PC-9 (cell line): ENCODE measurements at regions of chr5 and their contacts with region 1.

Region 1: GRCh38 chr5:130109152-130109551 is 204.9 kb downstream of the CHSY3 start:
- DNase-seq: no peak
- H3K4me3 ChIP-seq: no peak overlapping the region
- H3K27ac ChIP-seq: no peak overlapping the region
- H3K4me1 ChIP-seq: no peaks in the 10 kb centered on the region
- H3K27me3 ChIP-seq: no peaks in the 10 kb centered on the region
- CTCF ChIP-seq: peak; percentile 78

Region 2: DNA sequence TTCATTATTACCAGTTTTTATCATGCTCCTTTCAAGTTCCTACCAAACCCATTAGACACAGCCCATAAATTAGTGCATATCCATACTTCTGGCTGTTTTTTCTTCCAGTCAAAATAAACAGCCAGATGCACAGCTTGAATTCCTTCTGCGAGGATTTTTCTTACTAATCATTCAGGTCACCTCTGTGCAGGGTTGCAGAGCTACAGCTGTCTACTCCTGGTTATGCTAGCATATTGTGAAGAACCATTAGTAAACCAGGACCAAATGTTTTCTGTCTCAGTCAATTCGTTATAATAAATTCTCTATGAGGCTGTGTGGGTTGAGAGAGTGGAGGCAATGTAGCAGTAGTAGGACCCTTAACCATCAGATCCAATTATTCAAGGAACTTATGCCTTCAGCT is 369.4 kb before region 1 on chr5:
- CTCF ChIA-PET with region 1: no interaction called
- POLR2A ChIA-PET with region 1: no interaction called
- intact Hi-C with region 1: no loop called
- DNase-seq: no peak
- H3K4me3 ChIP-seq: no peak overlapping the region
- H3K27ac ChIP-seq: no peak overlapping the region
- H3K4me1 ChIP-seq: no peaks in the 10 kb centered on the region
- H3K27me3 ChIP-seq: no peaks in the 10 kb centered on the region
- CTCF ChIP-seq: no peak

Region 3: DNA sequence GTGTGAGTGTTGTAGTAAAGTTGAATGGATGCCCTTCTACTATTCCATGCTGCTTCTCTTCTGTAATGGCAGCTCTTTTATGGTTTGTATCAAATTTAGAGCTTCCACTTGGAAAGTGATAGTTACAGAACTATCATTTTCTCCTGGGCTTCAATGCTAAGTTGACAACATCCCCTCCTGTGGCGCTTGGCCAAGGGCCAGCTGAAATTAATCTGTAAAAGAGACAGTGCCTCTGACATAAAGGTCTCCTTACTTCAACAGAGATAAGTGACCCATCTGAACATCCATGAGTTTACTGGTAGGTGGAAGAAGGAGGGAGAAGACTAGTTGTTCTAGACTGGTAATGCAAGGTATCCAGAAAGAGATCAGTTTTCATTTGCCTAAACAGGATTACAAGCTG is 165.2 kb before region 1 on chr5:
- CTCF ChIA-PET with region 1: no interaction called
- POLR2A ChIA-PET with region 1: no interaction called
- intact Hi-C with region 1: no loop called
- DNase-seq: no peak
- H3K4me3 ChIP-seq: no peak overlapping the region
- H3K27ac ChIP-seq: no peak overlapping the region
- H3K4me1 ChIP-seq: no peaks in the 10 kb centered on the region
- H3K27me3 ChIP-seq: no peaks in the 10 kb centered on the region
- CTCF ChIP-seq: no peak

Region 4: GRCh38 chr5:129977810-129978209 is 131.3 kb before region 1 on chr5:
- CTCF ChIA-PET with region 1: no interaction called
- POLR2A ChIA-PET with region 1: no interaction called
- intact Hi-C with region 1: no loop called
- DNase-seq: no peak
- H3K4me3 ChIP-seq: no peak overlapping the region
- H3K27ac ChIP-seq: no peak overlapping the region
- H3K4me1 ChIP-seq: no peaks in the 10 kb centered on the region
- H3K27me3 ChIP-seq: no peaks in the 10 kb centered on the region
- CTCF ChIP-seq: no peak

Region 5: DNA sequence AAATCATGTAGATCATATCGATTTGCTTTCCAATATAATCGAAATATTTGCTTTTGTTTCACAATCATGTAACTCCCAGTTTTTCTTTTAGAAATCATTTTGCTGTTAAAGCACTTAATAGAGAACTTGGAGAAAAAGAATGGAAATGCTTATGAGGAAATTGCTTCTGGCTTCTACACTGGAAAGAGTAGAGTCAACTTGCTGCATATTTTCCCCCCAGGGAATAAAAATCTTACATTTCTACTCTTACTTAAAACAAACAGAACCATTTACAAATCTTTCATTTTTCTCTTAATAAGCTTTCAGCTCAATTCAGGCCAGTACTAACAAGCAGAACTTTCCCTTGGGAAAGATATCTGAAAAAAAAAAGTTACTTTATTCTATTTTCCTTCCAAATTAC is 107.1 kb after region 1 on chr5:
- CTCF ChIA-PET with region 1: no interaction called
- POLR2A ChIA-PET with region 1: no interaction called
- intact Hi-C with region 1: no loop called
- DNase-seq: no peak
- H3K4me3 ChIP-seq: no peak overlapping the region
- H3K27ac ChIP-seq: no peak overlapping the region
- H3K4me1 ChIP-seq: no peaks in the 10 kb centered on the region
- H3K27me3 ChIP-seq: no peaks in the 10 kb centered on the region
- CTCF ChIP-seq: no peak

Region 6: DNA sequence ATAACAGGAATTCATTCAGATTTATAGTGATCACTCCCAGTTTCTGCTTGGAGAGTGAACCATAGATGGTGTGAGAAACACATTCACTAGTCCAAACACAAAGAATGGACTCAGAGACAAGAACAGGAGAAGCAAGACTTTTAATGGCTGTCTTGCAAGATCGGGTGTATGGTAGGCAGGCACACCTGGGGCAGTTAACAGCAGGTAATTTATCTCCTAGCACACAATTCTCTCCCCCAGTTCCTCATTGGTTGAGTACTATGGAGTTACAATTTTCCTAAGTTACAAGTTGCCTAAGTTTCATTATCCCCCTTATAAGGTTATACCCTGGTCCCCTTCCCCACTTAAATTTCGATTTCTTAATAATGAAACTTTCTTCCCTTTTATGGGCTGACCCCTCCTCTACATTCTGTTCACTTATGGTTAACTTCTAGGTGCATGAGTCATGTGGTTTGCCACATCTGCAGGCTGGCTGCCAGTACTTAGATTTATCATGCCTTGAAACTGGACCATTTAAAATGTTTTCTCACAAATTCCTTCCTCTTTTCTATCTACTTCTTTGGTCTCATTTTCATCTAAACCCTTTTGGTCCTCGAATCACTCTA is 432.6 kb after region 1 on chr5:
- CTCF ChIA-PET with region 1: no interaction called
- POLR2A ChIA-PET with region 1: no interaction called
- intact Hi-C with region 1: loop called (anchors 5 kb)
- DNase-seq: peak in 1 of 2 experiments; percentile 58
- H3K4me3 ChIP-seq: no peak overlapping the region
- H3K27ac ChIP-seq: peak overlapping the region; percentile 23; the same call in 1 of the 2 replicates
- H3K4me1 ChIP-seq: peaks cover 44% of the 10 kb centered on the region
- H3K27me3 ChIP-seq: no peaks in the 10 kb centered on the region
- CTCF ChIP-seq: no peak

Region 7: GRCh38 chr5:130720355-130720754 is 611.2 kb after region 1 on chr5:
- CTCF ChIA-PET with region 1: no interaction called
- POLR2A ChIA-PET with region 1: no interaction called
- intact Hi-C with region 1: loop called (anchors 1 kb)
- DNase-seq: no peak
- H3K4me3 ChIP-seq: no peak overlapping the region
- H3K27ac ChIP-seq: no peak overlapping the region
- H3K4me1 ChIP-seq: no peaks in the 10 kb centered on the region
- H3K27me3 ChIP-seq: no peaks in the 10 kb centered on the region
- CTCF ChIP-seq: peak; percentile 76

Region 8: DNA sequence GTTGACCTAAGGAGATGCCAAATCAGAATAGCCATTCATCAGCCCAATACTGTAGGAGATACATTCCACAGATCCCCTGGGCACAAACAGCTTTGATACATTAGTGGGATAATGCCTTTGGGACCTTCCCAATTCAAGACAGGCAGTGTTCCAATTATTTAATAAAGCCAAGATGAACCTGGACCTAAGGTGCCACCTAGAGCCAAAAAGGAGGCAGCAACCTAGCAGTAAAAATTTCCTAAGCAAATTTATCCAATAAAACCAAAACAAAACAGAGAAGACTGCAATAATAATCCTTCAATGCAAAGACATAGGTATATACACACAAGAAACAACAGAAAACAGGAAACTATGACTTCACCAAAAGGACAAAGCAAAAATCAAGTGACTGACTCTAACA is 802.9 kb after region 1 on chr5:
- CTCF ChIA-PET with region 1: no interaction called
- POLR2A ChIA-PET with region 1: no interaction called
- intact Hi-C with region 1: loop called (anchors 2 kb)
- DNase-seq: no peak
- H3K4me3 ChIP-seq: no peak overlapping the region
- H3K27ac ChIP-seq: no peak overlapping the region
- H3K4me1 ChIP-seq: no peaks in the 10 kb centered on the region
- H3K27me3 ChIP-seq: no peaks in the 10 kb centered on the region
- CTCF ChIP-seq: peak; percentile 56

Region 9: GRCh38 chr5:131109540-131110255 is 1000.5 kb after region 1 on chr5:
- CTCF ChIA-PET with region 1: no interaction called
- POLR2A ChIA-PET with region 1: no interaction called
- intact Hi-C with region 1: loop called (anchors 2 kb)
- DNase-seq: peak in 1 of 2 experiments; percentile 11
- H3K4me3 ChIP-seq: no peak overlapping the region
- H3K27ac ChIP-seq: no peak overlapping the region
- H3K4me1 ChIP-seq: no peaks in the 10 kb centered on the region
- H3K27me3 ChIP-seq: no peaks in the 10 kb centered on the region
- CTCF ChIP-seq: peak; percentile 86